ENCODE measurements at regions of chr10 and their contacts with region 1.

Region 1: DNA sequence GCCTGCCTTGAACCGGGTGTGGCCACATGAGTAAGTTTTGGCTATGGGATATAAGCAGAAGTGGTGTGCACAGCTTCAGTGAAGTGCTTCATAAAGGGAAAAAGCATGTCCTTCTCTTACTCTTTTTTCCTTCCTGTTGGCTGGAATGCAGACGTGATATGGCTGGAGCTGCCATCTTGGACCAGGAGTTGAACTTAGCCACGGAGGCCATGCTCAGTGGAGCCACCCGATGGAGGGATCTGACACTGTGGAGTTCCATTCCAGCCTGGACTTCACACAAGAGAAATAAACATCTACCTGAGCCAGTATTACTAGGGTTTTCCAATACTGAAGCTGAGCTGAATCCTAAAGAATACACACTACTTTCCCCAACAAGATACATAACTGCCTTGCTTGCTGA is 52.3 kb downstream of the CCDC3 start:
- DNase-seq: no peak
- H3K4me3 ChIP-seq: no peak overlapping the region
- H3K27ac ChIP-seq: no peak overlapping the region
- H3K4me1 ChIP-seq: no peaks in the 10 kb centered on the region
- H3K27me3 ChIP-seq: no peaks in the 10 kb centered on the region
- CTCF ChIP-seq: no peak
- POLR2A ChIP-seq: no peak

Region 2: DNA sequence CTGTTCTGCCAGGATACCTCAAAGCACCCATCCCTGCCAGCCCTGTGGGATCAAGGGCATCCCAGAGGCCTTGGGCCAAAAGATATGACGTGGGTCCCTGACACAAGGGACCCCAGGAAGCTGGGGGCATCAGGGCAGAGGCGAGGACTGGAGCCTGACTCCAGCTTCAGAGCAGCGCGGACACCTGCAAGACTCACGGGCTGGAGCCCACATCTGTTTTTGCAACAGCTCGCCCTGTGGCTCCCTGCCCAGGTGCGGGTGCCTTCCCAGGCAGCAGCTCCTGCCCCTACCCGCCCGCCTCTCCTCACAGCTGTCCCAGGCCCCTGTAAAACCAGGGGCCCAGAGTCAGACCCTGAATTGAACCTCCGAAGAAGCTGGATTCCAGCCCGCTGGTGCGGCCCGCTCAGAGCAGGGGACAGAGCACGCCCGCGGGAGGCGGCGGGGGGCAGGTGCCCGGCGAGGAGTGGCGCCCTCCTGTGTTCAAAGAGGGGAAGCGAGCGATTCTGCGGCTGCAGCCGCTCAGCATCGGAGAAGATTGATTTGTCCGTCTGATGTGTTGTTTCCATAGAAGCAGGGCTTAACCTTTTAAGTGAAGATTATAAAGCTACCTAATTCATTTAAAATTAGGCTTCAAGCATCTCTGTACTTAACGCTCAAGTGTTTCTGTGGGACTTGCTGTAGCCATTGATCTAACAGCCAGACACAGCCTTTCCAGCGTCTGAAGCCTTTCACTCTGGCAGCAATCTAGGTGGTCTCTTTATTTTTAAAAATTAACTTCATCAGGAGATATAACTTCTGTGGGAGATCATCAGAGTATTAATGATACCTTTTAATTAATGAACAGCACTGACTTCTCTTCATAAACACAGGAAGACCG is 491.2 kb after region 1 on chr10:
- intact Hi-C with region 1: loop called (anchors 5 kb)
- DNase-seq: peak; percentile 21 to 70
- H3K4me3 ChIP-seq: peak overlapping the region; percentile 23 to 60 (median 45)
- H3K27ac ChIP-seq: no peak overlapping the region
- H3K4me1 ChIP-seq: no peaks in the 10 kb centered on the region
- H3K27me3 ChIP-seq: peaks cover 0 to 4% of the 10 kb centered on the region in 2 donors
- CTCF ChIP-seq: peak; percentile 67 to 82 (median 75)
- POLR2A ChIP-seq: no peak